CD4-positive, alpha-beta T cell (primary cell): ENCODE measurements at regions of chr9 and their contacts with region 1.

Region 1: DNA sequence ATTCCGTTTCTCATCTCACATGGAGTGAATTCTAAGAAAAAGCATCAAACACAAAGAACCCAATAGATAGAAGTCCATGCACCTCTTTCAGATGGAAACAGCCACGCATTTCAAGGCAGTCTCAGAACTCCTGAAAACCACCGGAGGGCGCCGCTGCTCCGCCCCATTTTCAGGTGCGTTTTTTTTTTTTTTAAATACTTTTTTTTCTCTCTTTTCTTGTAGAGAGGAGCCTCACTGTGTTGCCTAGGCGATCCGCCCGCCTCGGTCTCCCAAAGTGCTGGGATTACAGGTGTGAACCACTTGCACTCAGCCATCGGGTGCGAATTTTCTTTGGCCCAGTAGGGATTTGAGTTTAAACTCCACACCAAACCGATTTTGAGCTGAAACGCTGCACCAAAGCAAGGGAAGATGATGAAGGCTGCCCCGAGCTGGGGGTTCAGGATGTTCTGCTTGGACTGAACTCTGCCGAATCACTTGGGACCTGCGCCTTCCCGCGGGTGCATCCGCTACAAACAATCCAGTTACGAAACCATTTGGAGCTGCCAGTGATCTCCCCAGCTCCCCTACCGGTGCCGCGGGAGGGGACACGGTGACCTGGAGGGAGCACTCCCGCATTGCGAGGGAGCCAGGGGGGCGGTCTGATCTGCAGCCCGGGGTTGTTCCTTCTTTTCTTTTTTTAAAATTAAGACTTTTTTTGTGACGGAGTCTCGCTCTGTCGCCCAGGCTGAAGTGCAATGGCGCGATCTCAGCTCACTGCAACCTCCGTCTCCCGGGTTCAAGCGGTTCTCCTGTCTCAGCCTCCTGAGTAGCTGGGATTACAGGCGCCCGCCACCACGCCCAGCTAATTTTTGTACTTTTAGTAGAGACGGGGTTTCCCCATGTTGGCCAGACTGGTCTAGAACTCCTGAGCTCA is 1.4 kb downstream of the PTGR1 start:
- DNase-seq: peak; percentile 29 to 84 (median 59)
- ATAC-seq: peak; percentile 75
- H3K4me3 ChIP-seq: peak overlapping the region; percentile 61
- H3K4me3 Mint-ChIP-seq: peak overlapping the region; percentile 94
- H3K27ac ChIP-seq: no peak overlapping the region
- H3K27ac Mint-ChIP-seq: peak overlapping the region; percentile 62
- H3K4me1 ChIP-seq: peaks cover 24% of the 10 kb centered on the region
- H3K4me1 Mint-ChIP-seq: peaks cover 34% of the 10 kb centered on the region
- H3K27me3 ChIP-seq: peaks cover 24 to 28% of the 10 kb centered on the region in 2 experiments
- H3K27me3 Mint-ChIP-seq: peaks cover 47% of the 10 kb centered on the region
- CTCF ChIP-seq: peak; percentile 78

Region 2: DNA sequence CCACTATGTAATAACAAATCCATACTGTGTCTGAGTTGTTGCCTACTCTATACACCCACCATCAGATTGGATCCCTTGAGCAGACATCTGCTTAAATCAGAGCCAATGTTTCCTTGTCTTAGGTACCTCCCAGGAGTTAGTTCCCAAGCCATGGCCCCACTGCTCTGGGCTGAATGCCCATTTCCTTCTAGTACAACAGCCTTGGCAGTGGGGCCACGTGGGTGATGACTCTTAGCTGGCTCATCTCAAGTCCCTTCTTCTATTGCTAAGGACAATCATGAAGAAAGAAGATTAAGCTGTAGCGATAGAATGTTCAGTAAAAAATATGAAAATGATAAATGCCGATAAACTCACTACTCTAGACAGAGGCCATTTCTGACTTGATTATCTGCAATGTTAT is 15.2 kb before region 1 on chr9:
- CTCF ChIA-PET with region 1: no interaction called
- POLR2A ChIA-PET with region 1: no interaction called
- intact Hi-C with region 1: no loop called
- DNase-seq: no peak
- ATAC-seq: no peak
- H3K4me3 ChIP-seq: no peak overlapping the region
- H3K4me3 Mint-ChIP-seq: no peak overlapping the region
- H3K27ac ChIP-seq: no peak overlapping the region
- H3K27ac Mint-ChIP-seq: no peak overlapping the region
- H3K4me1 ChIP-seq: no peaks in the 10 kb centered on the region
- H3K4me1 Mint-ChIP-seq: no peaks in the 10 kb centered on the region
- H3K27me3 ChIP-seq: no peaks in the 10 kb centered on the region
- H3K27me3 Mint-ChIP-seq: no peaks in the 10 kb centered on the region
- CTCF ChIP-seq: no peak

Region 3: GRCh38 chr9:111621895-111622480 is 23.9 kb after region 1 on chr9:
- CTCF ChIA-PET with region 1: interaction called, 10 read pairs
- POLR2A ChIA-PET with region 1: interaction called, 4 read pairs
- intact Hi-C with region 1: loop called (anchors 1 kb)
- DNase-seq: peak in 7 of 14 experiments; percentile 14 to 69 (median 35)
- ATAC-seq: peak; percentile 85
- H3K4me3 ChIP-seq: no peak overlapping the region
- H3K4me3 Mint-ChIP-seq: no peak overlapping the region
- H3K27ac ChIP-seq: no peak overlapping the region
- H3K27ac Mint-ChIP-seq: no peak overlapping the region
- H3K4me1 ChIP-seq: no peaks in the 10 kb centered on the region
- H3K4me1 Mint-ChIP-seq: no peaks in the 10 kb centered on the region
- H3K27me3 ChIP-seq: no peaks in the 10 kb centered on the region
- H3K27me3 Mint-ChIP-seq: peaks cover 16% of the 10 kb centered on the region
- CTCF ChIP-seq: peak; percentile 73

Region 4: DNA sequence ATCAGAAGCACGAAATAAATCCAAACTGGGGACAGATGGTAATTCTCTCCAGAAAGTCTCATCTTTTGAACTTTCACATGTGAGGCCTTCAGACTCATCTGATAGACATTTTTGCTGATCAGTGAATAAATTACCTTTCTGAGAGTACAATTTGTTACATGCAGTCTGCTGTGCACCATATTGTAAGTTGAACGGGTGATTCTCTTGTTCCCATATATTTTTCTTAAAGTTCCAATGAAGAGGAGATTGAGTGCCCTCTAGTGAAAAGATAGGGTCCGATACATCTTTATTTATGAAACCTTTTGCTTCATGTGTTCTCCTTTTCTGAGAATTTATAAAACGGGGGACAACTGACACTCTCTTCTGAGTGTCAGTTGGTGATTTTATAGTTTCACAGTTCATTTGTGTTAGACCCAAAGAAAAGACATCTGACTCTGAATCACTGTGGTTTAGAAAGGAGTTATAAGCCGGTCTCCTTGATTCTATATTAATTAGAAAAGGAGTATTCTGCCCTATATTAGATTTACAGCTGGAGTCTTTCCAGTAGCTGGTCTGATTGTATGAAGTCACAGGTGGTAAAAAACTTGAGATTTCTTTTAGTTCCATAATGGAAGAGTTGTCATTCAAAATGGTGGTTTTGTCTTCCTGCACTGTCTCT is 93.7 kb after region 1 on chr9:
- CTCF ChIA-PET with region 1: no interaction called
- POLR2A ChIA-PET with region 1: interaction called, 3 read pairs
- intact Hi-C with region 1: loop called (anchors 2 kb)
- DNase-seq: peak in 3 of 14 experiments; percentile 22 to 24 (median 24)
- ATAC-seq: no peak
- H3K4me3 ChIP-seq: no peak overlapping the region
- H3K4me3 Mint-ChIP-seq: no peak overlapping the region
- H3K27ac ChIP-seq: no peak overlapping the region
- H3K27ac Mint-ChIP-seq: no peak overlapping the region
- H3K4me1 ChIP-seq: no peaks in the 10 kb centered on the region
- H3K4me1 Mint-ChIP-seq: no peaks in the 10 kb centered on the region
- H3K27me3 ChIP-seq: no peaks in the 10 kb centered on the region
- H3K27me3 Mint-ChIP-seq: no peaks in the 10 kb centered on the region
- CTCF ChIP-seq: peak; percentile 49

Region 5: GRCh38 chr9:111975709-111976108 is 377.6 kb after region 1 on chr9:
- CTCF ChIA-PET with region 1: no interaction called
- POLR2A ChIA-PET with region 1: no interaction called
- intact Hi-C with region 1: loop called in 1 of 2 experiments (anchors 10 kb)
- DNase-seq: peak in 6 of 14 experiments; percentile 12 to 51 (median 37)
- ATAC-seq: no peak
- H3K4me3 ChIP-seq: no peak overlapping the region
- H3K4me3 Mint-ChIP-seq: no peak overlapping the region
- H3K27ac ChIP-seq: no peak overlapping the region
- H3K27ac Mint-ChIP-seq: no peak overlapping the region
- H3K4me1 ChIP-seq: peaks cover 5% of the 10 kb centered on the region
- H3K4me1 Mint-ChIP-seq: peaks cover 12% of the 10 kb centered on the region
- H3K27me3 ChIP-seq: no peaks in the 10 kb centered on the region
- H3K27me3 Mint-ChIP-seq: no peaks in the 10 kb centered on the region
- CTCF ChIP-seq: no peak